ENCODE measurements at regions of chr17 and their contacts with region 1.

Region 1: DNA sequence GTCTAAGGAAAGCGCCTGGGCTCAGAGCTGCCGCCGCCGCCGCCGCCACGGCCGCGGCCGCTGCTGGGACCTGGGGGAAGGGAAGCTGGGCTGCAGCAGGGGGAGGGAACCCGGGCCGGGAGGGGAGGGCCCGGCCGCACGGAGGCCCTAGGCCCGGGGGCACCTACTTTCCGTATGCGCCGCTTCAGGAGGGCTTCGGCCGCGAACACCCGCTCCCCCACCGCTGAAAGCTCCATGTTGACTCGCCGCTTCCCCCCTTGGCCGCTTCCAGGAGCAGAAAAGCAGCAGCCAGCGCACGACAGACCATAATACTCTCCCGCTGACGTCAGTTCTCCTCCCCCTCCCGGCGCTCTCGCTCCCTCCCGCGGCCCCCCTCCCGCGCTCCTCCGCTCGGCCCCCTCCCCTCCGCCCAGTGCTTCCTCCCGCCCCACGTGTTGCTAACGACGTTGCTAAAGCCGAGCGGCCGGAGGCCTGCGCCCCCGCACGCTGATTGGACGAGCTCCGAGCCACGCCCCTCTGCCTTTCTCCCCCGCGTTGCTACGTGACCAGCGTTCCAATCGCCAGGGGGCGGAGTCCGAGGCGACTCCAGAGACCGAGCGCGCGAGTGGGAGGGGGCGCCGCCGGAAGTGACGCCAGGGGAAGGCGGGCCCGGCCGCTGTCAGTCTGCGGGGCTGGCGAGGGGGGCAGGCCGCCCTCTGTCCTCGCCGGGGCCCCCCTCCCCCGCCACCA is at the start of gene CBX8:
- DNase-seq: peak; percentile 91
- H3K4me3 ChIP-seq: peak within 1 kb of the TSS; percentile 78
- H3K27me3 ChIP-seq: peaks cover 32% of the 10 kb centered on the region
- CTCF ChIP-seq: 0 out of 2 replicates have a peak, but pooled peaks have one; percentile 14
- polyA plus RNA-seq, gene CBX8: 0.32 and 0.47 TPM in 2 replicates

Region 2: DNA sequence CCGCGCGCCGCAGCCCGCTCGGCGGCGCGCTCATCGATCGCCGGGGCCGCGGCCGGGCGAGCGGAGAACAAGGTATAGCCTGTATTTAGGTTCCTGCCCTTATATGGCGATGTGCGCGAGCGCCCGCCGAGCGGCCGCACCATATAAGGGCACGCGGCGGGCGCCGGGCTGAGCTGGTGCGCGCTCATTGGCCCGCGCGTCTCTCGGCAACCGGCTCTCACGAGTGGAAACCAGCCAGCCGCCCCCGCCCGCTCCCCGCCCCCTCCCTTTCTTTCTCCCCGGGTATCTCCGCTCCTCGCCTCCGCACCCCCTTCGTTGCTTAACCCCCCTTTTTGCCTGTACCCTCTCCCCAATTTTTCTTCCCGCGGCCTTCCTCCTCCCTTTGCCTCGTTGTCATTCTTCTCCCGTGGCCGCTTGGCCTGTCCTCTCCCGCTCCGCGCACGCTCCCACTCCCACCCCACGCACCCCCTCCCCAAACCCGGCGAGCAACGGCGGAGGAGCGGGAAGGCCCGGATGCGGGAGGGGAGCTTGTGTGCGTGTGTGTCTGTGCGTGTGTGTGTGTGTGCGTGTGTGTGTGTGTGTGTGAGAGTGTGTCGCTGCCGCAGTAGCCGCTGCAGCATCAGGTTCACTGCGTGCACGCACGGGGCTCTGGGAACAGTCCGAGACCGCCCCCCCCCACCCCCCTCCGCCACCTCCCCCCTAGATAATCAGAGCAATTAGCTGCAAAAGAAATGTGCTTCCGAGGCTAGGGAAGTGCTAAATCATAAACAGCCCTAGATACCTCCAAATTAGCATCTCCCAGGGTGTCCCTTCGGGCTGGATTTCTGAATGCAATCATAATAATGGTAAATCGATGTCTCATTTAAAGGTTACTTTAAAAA is 13.4 kb after region 1 on chr17:
- CTCF ChIA-PET with region 1: interaction called, 6 read pairs
- POLR2A ChIA-PET with region 1: interaction called, 19 read pairs
- DNase-seq: no peak
- H3K4me3 ChIP-seq: no peak overlapping the region
- H3K27me3 ChIP-seq: peaks cover 74% of the 10 kb centered on the region
- CTCF ChIP-seq: no peak